Cardiac septum (tissue), 1 donor: ENCODE measurements at regions of chr10 and their contacts with region 1.

Region 1: GRCh38 chr10:87094373-87095235 is at the starts of genes GLUD1 and SHLD2:
- DNase-seq: peak; percentile 96
- total RNA-seq, gene GLUD1: 118 TPM
- total RNA-seq, gene SHLD2: 13.7 TPM

Region 2: DNA sequence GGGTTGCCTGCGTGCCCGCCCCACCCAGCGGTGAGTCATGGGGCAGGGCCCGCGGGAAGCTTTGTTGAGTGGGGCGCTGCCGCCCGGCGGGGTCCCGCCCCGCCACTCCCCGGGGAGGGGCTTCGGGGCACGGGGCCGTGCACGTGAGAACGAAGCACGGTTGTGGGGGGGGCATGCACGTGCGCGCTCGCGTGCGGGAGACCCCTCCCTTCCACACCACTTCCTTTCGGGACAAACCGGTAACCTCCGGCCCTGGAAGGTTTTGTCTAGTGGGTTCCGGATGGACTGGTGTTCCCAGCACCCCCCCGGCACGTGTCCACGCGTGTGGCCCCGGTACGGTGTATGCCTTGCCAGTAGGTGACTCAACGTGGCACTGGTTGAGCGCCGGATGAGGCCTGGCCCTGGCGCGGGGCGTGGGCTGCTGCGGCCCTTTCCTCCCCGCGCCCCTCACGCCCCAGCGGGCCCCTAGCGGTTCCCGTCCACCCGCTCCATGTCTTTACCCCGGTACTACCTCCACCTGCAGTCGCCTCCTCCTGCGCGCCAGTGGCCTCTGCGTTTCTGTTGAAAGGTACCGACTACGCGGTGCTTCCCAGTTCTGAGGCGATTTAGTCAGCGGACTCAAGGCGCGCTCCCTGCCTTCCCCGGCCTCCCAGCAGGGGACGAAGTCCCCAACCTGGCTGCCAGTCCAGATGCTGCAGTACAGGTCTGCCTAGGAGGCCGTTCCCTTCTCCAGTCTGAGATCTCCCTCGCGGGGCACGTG is 123.2 kb before region 1 on chr10:
- intact Hi-C with region 1: loop called (anchors 2 kb)
- DNase-seq: peak; percentile 89